Astrocyte of the cerebellum (primary cell): ENCODE measurements at regions of chr15 and their contacts with region 1.

Region 1: GRCh38 chr15:57866149-57866736 is 159.7 kb downstream of the POLR2M start:
- DNase-seq: no peak
- H3K4me3 ChIP-seq: no peak overlapping the region
- CTCF ChIP-seq: peak; percentile 75

Region 2: GRCh38 chr15:57706405-57707209 is 159.6 kb before region 1 on chr15 and contains the start of gene POLR2M:
- in situ Hi-C with region 1: loop called (anchors 25 kb)
- DNase-seq: peak; percentile 99
- H3K4me3 ChIP-seq: peak within 1 kb of the TSS; percentile 94
- CTCF ChIP-seq: no peak

Region 3: GRCh38 chr15:57797110-57797509 is 69.1 kb before region 1 on chr15:
- in situ Hi-C with region 1: loop called (anchors 5 kb)
- DNase-seq: no peak
- H3K4me3 ChIP-seq: no peak overlapping the region
- CTCF ChIP-seq: no peak

Region 4: GRCh38 chr15:57911247-57911646 is 45.0 kb after region 1 on chr15:
- in situ Hi-C with region 1: no loop called
- DNase-seq: no peak
- H3K4me3 ChIP-seq: no peak overlapping the region
- CTCF ChIP-seq: no peak